B cell (primary cell): ENCODE measurements at regions of chr6 and their contacts with region 1.

Region 1: DNA sequence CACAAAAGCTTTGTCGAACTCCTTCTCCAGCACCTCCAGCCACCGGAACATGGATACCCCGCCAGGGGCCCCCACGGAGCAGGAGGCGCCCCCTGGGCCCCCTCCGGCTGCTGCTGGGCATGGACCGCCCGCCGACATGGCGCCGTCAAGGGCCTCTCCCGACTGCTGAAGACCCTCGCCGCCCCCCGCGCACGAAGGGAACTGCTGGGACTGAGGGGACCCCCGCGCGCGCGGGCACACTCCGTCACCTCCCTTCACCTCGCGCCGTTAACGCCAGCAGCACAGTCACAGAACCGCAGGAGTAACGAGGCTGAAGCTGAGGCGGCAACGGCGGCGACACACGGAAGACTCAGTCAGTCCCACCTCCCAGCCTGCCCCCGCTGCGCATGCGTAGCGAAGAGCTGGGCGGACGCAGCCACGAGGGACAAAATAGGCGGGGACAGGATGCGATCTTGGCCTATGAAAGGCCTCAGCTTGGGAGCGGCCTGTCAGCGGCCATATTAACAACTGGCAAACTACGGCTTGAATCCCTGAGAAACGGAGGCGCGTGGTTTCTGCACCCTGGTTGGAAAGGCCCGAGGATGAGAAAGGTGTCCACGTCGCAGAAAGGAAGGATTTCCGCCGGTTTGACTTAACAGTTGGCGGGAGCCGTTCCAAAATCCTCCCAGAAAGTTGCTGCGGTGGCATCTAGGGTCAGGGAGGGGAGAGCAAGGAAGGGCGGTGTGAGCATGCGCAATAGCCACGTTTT is at the start of gene GOPC:
- DNase-seq: peak; percentile 98
- ATAC-seq: peak; percentile 95
- H3K4me3 ChIP-seq: peak within 1 kb of the TSS; percentile 86 to 96 (median 91)
- H3K4me3 Mint-ChIP-seq: peak within 1 kb of the TSS; percentile 100
- H3K27ac ChIP-seq: peak within 1 kb of the TSS; percentile 70 to 80
- H3K27ac Mint-ChIP-seq: peak within 1 kb of the TSS; percentile 97
- H3K4me1 ChIP-seq: peaks cover 20 to 25% of the 10 kb centered on the region in 2 donors
- H3K4me1 Mint-ChIP-seq: peaks cover 45% of the 10 kb centered on the region
- H3K27me3 ChIP-seq: no peaks in the 10 kb centered on the region
- H3K27me3 Mint-ChIP-seq: peaks cover 3% of the 10 kb centered on the region
- CTCF ChIP-seq: peak; percentile 35
- total RNA-seq, gene GOPC: 25.0 and 26.7 TPM in 2 replicates

Region 2: DNA sequence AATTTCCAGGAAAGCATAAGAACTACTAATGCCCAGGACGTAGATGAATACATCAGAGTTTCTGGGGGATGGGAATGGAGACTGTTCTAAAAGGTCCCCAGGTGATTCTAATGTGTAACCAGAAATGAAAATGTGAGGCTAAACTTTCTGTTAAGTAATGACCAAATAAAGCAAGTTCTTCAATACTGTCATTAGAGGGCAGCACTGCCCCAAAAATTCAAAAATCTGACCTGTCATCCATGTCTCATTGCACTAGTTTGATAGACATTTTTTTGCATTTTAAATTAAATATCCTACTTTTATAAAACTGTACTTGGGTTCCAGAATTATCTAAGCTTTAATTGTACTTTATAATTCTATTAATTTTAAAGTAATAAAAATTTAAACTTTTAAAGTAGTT is 630.4 kb before region 1 on chr6:
- CTCF ChIA-PET with region 1: no interaction called
- POLR2A ChIA-PET with region 1: no interaction called
- intact Hi-C with region 1: loop called (anchors 5 kb)
- DNase-seq: peak; percentile 17
- ATAC-seq: no peak
- H3K4me3 ChIP-seq: no peak overlapping the region
- H3K4me3 Mint-ChIP-seq: no peak overlapping the region
- H3K27ac ChIP-seq: no peak overlapping the region
- H3K27ac Mint-ChIP-seq: no peak overlapping the region
- H3K4me1 ChIP-seq: no peaks in the 10 kb centered on the region
- H3K4me1 Mint-ChIP-seq: no peaks in the 10 kb centered on the region
- H3K27me3 ChIP-seq: peaks cover 0 to 3% (median 0%) of the 10 kb centered on the region in 4 experiments
- H3K27me3 Mint-ChIP-seq: no peaks in the 10 kb centered on the region
- CTCF ChIP-seq: peak; percentile 67

Region 3: GRCh38 chr6:117482240-117483003 is 119.9 kb before region 1 on chr6 and contains the start of gene DCBLD1:
- CTCF ChIA-PET with region 1: interaction called, 5 read pairs
- POLR2A ChIA-PET with region 1: no interaction called
- intact Hi-C with region 1: loop called (anchors 2 kb)
- DNase-seq: peak; percentile 67
- ATAC-seq: peak; percentile 80
- H3K4me3 ChIP-seq: peak within 1 kb of the TSS; percentile 23 to 83 (median 68)
- H3K4me3 Mint-ChIP-seq: peak within 1 kb of the TSS; percentile 86
- H3K27ac ChIP-seq: peak within 1 kb of the TSS in 1 of 2 donors; percentile 18
- H3K27ac Mint-ChIP-seq: peak within 1 kb of the TSS; percentile 53
- H3K4me1 ChIP-seq: peaks cover 22 to 26% of the 10 kb centered on the region in 2 donors
- H3K4me1 Mint-ChIP-seq: peaks cover 19% of the 10 kb centered on the region
- H3K27me3 ChIP-seq: peaks cover 0 to 43% (median 36%) of the 10 kb centered on the region in 4 experiments
- H3K27me3 Mint-ChIP-seq: peaks cover 60% of the 10 kb centered on the region
- CTCF ChIP-seq: no peak
- total RNA-seq, gene DCBLD1: 0.37 and 1.2 TPM in 2 replicates

Region 4: DNA sequence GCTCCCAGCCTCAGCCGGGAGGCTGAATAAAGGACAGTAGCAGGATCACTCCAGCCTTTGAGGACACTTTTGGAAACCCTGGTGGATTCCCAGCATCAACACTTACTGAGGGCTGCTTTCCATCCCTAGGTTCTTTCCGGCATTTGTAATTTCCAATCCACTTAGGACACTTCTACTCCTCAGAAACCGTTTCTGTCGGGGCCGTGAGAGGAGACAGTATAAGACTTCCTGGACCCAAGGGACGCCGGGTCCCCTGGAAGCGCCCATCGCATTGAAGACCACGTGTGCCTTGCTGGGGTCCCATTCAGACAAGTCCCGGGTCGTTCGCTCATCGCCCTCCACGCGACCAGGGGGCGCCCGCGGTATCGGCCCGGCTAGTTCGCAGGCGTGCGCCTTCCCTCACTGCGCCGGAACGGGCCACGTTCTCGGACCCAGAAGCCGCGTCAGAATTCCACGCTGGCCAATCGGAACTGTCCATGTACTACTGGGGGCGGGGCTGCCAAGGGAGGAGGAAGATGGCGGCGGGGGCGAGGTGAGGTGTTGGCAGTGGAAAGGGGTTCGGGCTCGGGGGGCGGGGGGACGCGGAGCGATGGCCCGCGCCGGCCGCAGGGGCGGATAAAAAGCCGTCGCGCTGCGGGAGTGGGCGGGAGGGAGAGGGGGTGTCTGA is 72.8 kb after region 1 on chr6 and contains the start of gene NUS1:
- CTCF ChIA-PET with region 1: interaction called, 5 read pairs
- POLR2A ChIA-PET with region 1: no interaction called
- intact Hi-C with region 1: loop called (anchors 1 kb)
- DNase-seq: peak; percentile 98
- ATAC-seq: peak; percentile 98
- H3K4me3 ChIP-seq: peak within 1 kb of the TSS; percentile 55 to 81 (median 65)
- H3K4me3 Mint-ChIP-seq: peak within 1 kb of the TSS; percentile 90
- H3K27ac ChIP-seq: peak within 1 kb of the TSS; percentile 55 to 75
- H3K27ac Mint-ChIP-seq: peak within 1 kb of the TSS; percentile 94
- H3K4me1 ChIP-seq: peaks cover 28 to 30% of the 10 kb centered on the region in 2 donors
- H3K4me1 Mint-ChIP-seq: peaks cover 42% of the 10 kb centered on the region
- H3K27me3 ChIP-seq: no peaks in the 10 kb centered on the region
- H3K27me3 Mint-ChIP-seq: no peaks in the 10 kb centered on the region
- CTCF ChIP-seq: peak; percentile 75
- total RNA-seq, gene NUS1: 22.1 and 23.1 TPM in 2 replicates

Region 5: GRCh38 chr6:118354641-118355040 is 752.3 kb after region 1 on chr6:
- CTCF ChIA-PET with region 1: no interaction called
- POLR2A ChIA-PET with region 1: no interaction called
- intact Hi-C with region 1: no loop called
- DNase-seq: no peak
- ATAC-seq: no peak
- H3K4me3 ChIP-seq: no peak overlapping the region
- H3K4me3 Mint-ChIP-seq: no peak overlapping the region
- H3K27ac ChIP-seq: no peak overlapping the region
- H3K27ac Mint-ChIP-seq: no peak overlapping the region
- H3K4me1 ChIP-seq: no peaks in the 10 kb centered on the region
- H3K4me1 Mint-ChIP-seq: peaks cover 10% of the 10 kb centered on the region
- H3K27me3 ChIP-seq: no peaks in the 10 kb centered on the region
- H3K27me3 Mint-ChIP-seq: peaks cover 3% of the 10 kb centered on the region
- CTCF ChIP-seq: no peak